CD4-positive, alpha-beta memory T cell (primary cell): ENCODE measurements at regions of chr12 and their contacts with region 1.

Region 1: GRCh38 chr12:29380536-29381523 is at the start of gene ERGIC2:
- DNase-seq: peak; percentile 93 to 96 (median 96)
- H3K4me3 ChIP-seq: peak within 1 kb of the TSS; percentile 92 to 100
- H3K4me3 Mint-ChIP-seq: peak within 1 kb of the TSS; percentile 89 to 98 (median 94)
- H3K27ac ChIP-seq: peak within 1 kb of the TSS; percentile 95
- H3K27ac Mint-ChIP-seq: peak within 1 kb of the TSS; percentile 94 to 99 (median 98)
- H3K4me1 ChIP-seq: peaks cover 27% of the 10 kb centered on the region
- H3K4me1 Mint-ChIP-seq: peaks cover 24 to 57% (median 46%) of the 10 kb centered on the region in 4 donors
- H3K27me3 ChIP-seq: no peaks in the 10 kb centered on the region
- H3K27me3 Mint-ChIP-seq: no peaks in the 10 kb centered on the region
- total RNA-seq, gene ERGIC2: 74.9 to 82.9 TPM

Region 2: GRCh38 chr12:29334937-29335336 is 45.9 kb before region 1 on chr12:
- CTCF ChIA-PET with region 1: no interaction called
- POLR2A ChIA-PET with region 1: no interaction called
- intact Hi-C with region 1: no loop called
- DNase-seq: no peak
- H3K4me3 ChIP-seq: no peak overlapping the region
- H3K4me3 Mint-ChIP-seq: no peak overlapping the region
- H3K27ac ChIP-seq: no peak overlapping the region
- H3K27ac Mint-ChIP-seq: no peak overlapping the region
- H3K4me1 ChIP-seq: no peaks in the 10 kb centered on the region
- H3K4me1 Mint-ChIP-seq: no peaks in the 10 kb centered on the region
- H3K27me3 ChIP-seq: no peaks in the 10 kb centered on the region
- H3K27me3 Mint-ChIP-seq: no peaks in the 10 kb centered on the region

Region 3: DNA sequence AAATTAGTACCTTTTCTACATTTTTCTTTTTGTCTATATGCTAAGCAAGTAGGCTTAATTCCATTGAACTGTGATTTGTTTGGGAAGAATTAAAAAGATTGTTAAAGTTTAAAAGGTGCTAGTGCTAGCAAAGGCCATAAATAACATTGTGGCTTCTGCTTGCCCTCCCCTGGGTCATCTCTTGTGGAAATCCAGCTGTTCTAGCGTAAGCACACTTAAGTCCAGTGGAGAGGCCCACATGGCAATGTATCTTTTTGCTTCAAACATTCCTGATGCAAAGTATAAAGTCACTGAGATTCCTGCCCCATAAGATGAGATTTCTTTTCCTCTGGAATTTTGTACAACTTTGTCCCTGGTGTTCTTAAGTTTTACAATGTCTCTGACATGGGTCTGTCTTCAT is 14.5 kb after region 1 on chr12:
- CTCF ChIA-PET with region 1: interaction called, 3 read pairs
- POLR2A ChIA-PET with region 1: interaction called, 38 read pairs
- intact Hi-C with region 1: loop called (anchors 1 kb)
- DNase-seq: no peak
- H3K4me3 ChIP-seq: no peak overlapping the region
- H3K4me3 Mint-ChIP-seq: no peak overlapping the region
- H3K27ac ChIP-seq: no peak overlapping the region
- H3K27ac Mint-ChIP-seq: no peak overlapping the region
- H3K4me1 ChIP-seq: peaks cover 9% of the 10 kb centered on the region
- H3K4me1 Mint-ChIP-seq: peaks cover 8 to 11% (median 10%) of the 10 kb centered on the region in 4 donors
- H3K27me3 ChIP-seq: no peaks in the 10 kb centered on the region
- H3K27me3 Mint-ChIP-seq: peaks cover 6 to 11% of the 10 kb centered on the region in 2 donors